ENCODE measurements at regions of chr1 and their contacts with region 1.

Region 1: GRCh38 chr1:61641578-61642336 is 83.2 kb downstream of the TM2D1 start:
- DNase-seq: peak; percentile 90
- H3K4me3 ChIP-seq: peak overlapping the region in 2 of 4 donors; percentile 21 to 22
- H3K27ac ChIP-seq: peak overlapping the region; percentile 66 to 80 (median 76)
- H3K4me1 ChIP-seq: peaks cover 0 to 54% (median 39%) of the 10 kb centered on the region in 4 donors
- H3K27me3 ChIP-seq: no peaks in the 10 kb centered on the region
- CTCF ChIP-seq: peak; percentile 17 to 67 (median 43)
- EP300 ChIP-seq: no peak
- POLR2A ChIP-seq: no peak

Region 2: DNA sequence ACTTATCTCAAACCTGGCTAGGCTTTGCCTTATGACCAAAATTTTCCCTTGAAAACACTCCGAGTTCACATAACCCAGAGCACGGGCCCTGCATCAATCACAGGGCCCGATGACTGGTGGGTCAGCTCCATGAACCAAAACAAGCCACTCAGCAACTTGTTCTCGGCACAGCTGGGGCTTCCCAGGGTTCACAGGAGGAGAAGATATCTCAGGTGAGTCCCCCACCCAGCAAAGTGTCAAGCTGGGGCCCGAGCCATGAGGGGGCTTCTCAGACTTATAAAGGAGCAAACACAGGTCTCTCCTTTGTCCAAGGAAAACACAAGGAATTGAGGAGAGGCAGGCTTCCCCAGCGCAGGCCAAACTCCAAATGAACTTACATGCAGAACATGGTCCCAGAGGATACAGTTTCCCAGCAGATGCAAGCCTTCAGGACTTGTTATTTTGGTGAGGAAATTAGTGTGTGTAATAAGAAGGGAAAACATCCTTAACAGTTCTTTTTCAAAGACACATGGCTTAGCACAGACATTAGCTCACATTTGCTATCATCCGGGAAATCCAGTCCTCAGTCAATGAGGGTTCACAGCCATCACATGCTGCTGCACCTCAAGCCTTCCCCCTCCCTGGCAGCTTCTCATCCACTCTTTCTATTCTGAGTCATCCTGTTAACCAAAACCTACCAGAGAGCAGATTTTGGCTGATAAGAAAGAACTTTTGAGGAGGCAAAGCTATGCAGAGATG is 657.5 kb before region 1 on chr1:
- intact Hi-C with region 1: loop called (anchors 5 kb)
- DNase-seq: peak; percentile 91
- H3K4me3 ChIP-seq: no peak overlapping the region
- H3K27ac ChIP-seq: peak overlapping the region; percentile 54 to 70 (median 62)
- H3K4me1 ChIP-seq: peaks cover 0 to 12% (median 9%) of the 10 kb centered on the region in 4 donors
- H3K27me3 ChIP-seq: no peaks in the 10 kb centered on the region
- CTCF ChIP-seq: no peak
- EP300 ChIP-seq: peak in 1 of 4 donors; percentile 12
- POLR2A ChIP-seq: no peak

Region 3: DNA sequence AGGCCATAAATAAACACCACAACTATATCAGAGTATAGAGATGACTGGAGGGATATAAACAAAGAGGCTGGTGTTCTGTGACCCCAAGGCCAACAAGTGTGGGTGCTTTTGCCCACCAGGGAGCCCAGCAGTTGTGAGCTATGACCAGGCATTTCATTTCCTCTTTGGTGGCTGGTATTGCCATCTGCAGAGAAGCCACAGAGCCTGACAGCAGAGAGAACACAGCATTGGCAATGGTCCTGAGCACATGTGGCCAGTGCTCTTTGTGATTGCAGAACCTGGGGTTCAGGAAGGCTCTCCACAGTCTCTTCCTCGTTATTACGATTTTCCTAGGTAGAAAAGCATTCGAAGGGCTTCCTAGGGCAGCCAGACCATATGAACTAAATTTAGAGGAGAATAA is 29.2 kb before region 1 on chr1:
- intact Hi-C with region 1: no loop called
- DNase-seq: no peak
- H3K4me3 ChIP-seq: no peak overlapping the region
- H3K27ac ChIP-seq: no peak overlapping the region
- H3K4me1 ChIP-seq: peaks cover 0 to 5% (median 3%) of the 10 kb centered on the region in 4 donors
- H3K27me3 ChIP-seq: no peaks in the 10 kb centered on the region
- CTCF ChIP-seq: no peak
- EP300 ChIP-seq: no peak
- POLR2A ChIP-seq: no peak

Region 4: GRCh38 chr1:61674221-61674620 is 32.5 kb after region 1 on chr1:
- intact Hi-C with region 1: no loop called
- DNase-seq: no peak
- H3K4me3 ChIP-seq: no peak overlapping the region
- H3K27ac ChIP-seq: no peak overlapping the region
- H3K4me1 ChIP-seq: no peaks in the 10 kb centered on the region
- H3K27me3 ChIP-seq: no peaks in the 10 kb centered on the region
- CTCF ChIP-seq: no peak
- EP300 ChIP-seq: no peak
- POLR2A ChIP-seq: no peak

Region 5: GRCh38 chr1:61818992-61819391 is 177.2 kb after region 1 on chr1:
- intact Hi-C with region 1: no loop called
- DNase-seq: no peak
- H3K4me3 ChIP-seq: no peak overlapping the region
- H3K27ac ChIP-seq: no peak overlapping the region
- H3K4me1 ChIP-seq: no peaks in the 10 kb centered on the region
- H3K27me3 ChIP-seq: no peaks in the 10 kb centered on the region
- CTCF ChIP-seq: no peak
- EP300 ChIP-seq: no peak
- POLR2A ChIP-seq: no peak